ENCODE measurements at regions of chr5 and their contacts with region 1.

Region 1: DNA sequence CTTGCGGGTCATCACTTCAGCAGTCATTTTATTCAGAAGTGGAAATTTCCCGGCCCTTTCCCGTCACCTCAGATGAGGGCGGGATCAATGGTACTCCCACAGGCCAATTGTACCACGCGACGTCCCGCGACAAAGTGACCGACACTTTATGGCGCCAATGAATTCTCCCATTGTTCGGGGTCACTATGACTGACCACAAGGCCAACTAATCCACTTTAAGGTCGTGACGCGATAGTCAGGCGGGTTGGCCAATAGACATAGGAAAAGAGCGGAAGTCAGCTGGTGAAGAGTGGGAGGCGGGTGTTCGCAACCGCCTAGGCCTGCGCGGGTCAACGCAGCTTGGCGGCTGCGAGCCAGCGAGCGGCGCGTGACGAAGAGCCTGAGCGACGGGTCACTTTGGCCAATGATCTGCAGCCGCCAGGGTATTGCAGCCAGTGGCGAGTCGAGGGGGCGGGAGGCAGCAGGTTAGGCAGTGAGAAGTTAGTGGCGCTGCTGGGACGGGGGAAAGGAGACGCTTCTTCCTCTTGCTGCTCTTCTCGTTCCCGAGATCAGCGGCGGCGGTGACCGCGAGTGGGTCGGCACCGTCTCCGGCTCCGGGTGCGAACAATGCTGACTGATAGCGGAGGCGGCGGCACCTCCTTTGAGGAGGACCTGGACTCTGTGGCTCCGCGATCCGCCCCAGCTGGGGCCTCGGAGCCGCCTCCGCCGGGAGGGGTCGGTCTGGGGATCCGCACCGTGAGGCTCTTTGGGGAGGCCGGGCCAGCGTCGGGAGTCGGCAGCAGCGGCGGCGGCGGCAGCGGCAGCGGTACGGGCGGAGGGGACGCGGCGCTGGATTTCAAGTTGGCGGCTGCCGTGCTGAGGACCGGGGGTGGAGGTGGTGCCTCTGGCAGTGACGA is at the start of gene ANKHD1:
- DNase-seq: peak; percentile 99
- H3K4me3 Mint-ChIP-seq: no peak within 1 kb of the TSS
- H3K27ac Mint-ChIP-seq: no peak within 1 kb of the TSS
- H3K4me1 Mint-ChIP-seq: peaks cover 31% of the 10 kb centered on the region
- H3K27me3 Mint-ChIP-seq: no peaks in the 10 kb centered on the region
- total RNA-seq, gene ANKHD1: 102 to 105 TPM

Region 2: GRCh38 chr5:140244525-140245025 is 157.0 kb before region 1 on chr5:
- CTCF ChIA-PET with region 1: interaction called, 12 read pairs
- POLR2A ChIA-PET with region 1: no interaction called
- intact Hi-C with region 1: no loop called
- DNase-seq: peak; percentile 88
- H3K4me3 Mint-ChIP-seq: no peak overlapping the region
- H3K27ac Mint-ChIP-seq: no peak overlapping the region
- H3K4me1 Mint-ChIP-seq: peaks cover 23% of the 10 kb centered on the region
- H3K27me3 Mint-ChIP-seq: no peaks in the 10 kb centered on the region

Region 3: GRCh38 chr5:140381972-140382371 is 19.6 kb before region 1 on chr5:
- CTCF ChIA-PET with region 1: no interaction called
- POLR2A ChIA-PET with region 1: no interaction called
- intact Hi-C with region 1: loop called (anchors 1 kb)
- DNase-seq: peak; percentile 51
- H3K4me3 Mint-ChIP-seq: no peak overlapping the region
- H3K27ac Mint-ChIP-seq: no peak overlapping the region
- H3K4me1 Mint-ChIP-seq: peaks cover 15% of the 10 kb centered on the region
- H3K27me3 Mint-ChIP-seq: no peaks in the 10 kb centered on the region

Region 4: GRCh38 chr5:140557136-140557805 is 155.7 kb after region 1 on chr5 and contains the start of gene SRA1:
- CTCF ChIA-PET with region 1: no interaction called
- POLR2A ChIA-PET with region 1: interaction called, 3 read pairs
- intact Hi-C with region 1: loop called (anchors 2 kb)
- DNase-seq: peak; percentile 93
- H3K4me3 Mint-ChIP-seq: peak within 1 kb of the TSS; percentile 86
- H3K27ac Mint-ChIP-seq: peak within 1 kb of the TSS; percentile 90
- H3K4me1 Mint-ChIP-seq: peaks cover 45% of the 10 kb centered on the region
- H3K27me3 Mint-ChIP-seq: no peaks in the 10 kb centered on the region
- total RNA-seq, gene SRA1: 46.0 to 46.7 TPM

Region 5: DNA sequence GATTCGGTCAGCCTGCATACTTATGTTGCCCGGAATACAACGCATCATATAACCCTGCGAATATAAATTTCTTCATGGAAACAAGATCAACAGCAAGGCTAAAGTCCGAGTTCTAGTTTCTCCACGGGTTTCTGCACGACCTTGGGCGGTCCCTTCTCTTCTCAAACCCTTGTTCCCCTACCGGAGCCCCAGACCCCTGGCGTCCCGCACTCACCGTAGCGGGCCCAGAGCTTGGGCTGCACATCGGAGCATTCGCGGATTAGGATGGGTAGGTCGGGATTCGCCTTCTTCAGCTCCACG is 245.4 kb after region 1 on chr5:
- CTCF ChIA-PET with region 1: no interaction called
- POLR2A ChIA-PET with region 1: interaction called, 15 read pairs
- intact Hi-C with region 1: no loop called
- DNase-seq: no peak
- H3K4me3 Mint-ChIP-seq: peak overlapping the region; percentile 100
- H3K27ac Mint-ChIP-seq: peak overlapping the region; percentile 98
- H3K4me1 Mint-ChIP-seq: peaks cover 35% of the 10 kb centered on the region
- H3K27me3 Mint-ChIP-seq: no peaks in the 10 kb centered on the region

Region 6: DNA sequence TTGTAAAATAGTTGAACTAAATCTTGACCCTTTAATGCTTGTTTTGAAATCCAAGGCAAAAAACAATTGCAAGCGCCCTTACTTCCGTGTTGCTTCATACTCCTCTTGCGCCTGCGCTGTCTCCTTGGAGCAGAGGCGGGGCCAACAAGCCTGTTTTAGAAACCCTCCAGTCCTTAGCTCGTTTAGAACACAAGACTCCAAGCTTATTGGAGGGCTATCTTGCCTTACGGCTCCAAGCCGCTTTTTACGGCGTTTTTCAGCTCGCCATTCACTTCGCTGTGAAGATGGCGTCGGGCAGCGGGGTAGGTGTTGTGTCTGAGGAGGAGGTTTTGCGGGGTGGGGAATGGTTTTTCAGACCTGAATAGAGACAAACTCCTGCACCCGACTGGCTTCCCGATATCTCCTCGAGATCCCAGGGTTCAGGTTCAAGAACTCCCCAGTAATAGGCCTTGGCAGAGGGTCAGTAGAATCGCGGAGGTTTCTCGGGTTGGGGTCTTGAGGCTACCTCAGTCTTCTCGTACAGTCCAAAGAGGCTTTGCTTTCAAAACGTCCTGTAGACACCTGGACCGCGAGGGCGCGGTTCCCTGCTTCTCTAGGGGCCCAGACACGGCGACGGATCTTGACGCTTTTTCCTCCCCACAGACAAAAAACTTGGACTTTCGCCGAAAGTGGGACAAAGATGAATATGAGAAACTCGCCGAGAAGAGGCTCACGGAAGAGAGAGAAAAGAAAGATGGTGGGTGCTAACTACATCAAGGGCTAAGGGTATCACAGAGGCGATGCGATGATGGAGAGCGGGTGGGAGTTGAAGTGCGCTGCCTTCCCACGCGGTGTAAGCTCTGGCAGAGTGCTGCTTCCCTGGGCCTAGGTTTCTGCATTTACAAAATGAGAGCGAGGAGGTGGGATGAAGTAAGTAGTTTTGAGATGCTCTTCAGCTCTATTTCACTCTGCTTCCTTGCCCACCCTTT is 298.9 kb after region 1 on chr5 and contains the start of gene ZMAT2:
- CTCF ChIA-PET with region 1: no interaction called
- POLR2A ChIA-PET with region 1: interaction called, 3 read pairs
- intact Hi-C with region 1: loop called (anchors 2 kb)
- DNase-seq: peak; percentile 97
- H3K4me3 Mint-ChIP-seq: peak within 1 kb of the TSS; percentile 97
- H3K27ac Mint-ChIP-seq: peak within 1 kb of the TSS; percentile 90
- H3K4me1 Mint-ChIP-seq: peaks cover 28% of the 10 kb centered on the region
- H3K27me3 Mint-ChIP-seq: no peaks in the 10 kb centered on the region
- total RNA-seq, gene ZMAT2: 51.4 to 53.4 TPM

Region 7: GRCh38 chr5:140977003-140977402 is 575.4 kb after region 1 on chr5:
- CTCF ChIA-PET with region 1: no interaction called
- POLR2A ChIA-PET with region 1: no interaction called
- intact Hi-C with region 1: no loop called
- DNase-seq: no peak
- H3K4me3 Mint-ChIP-seq: no peak overlapping the region
- H3K27ac Mint-ChIP-seq: no peak overlapping the region
- H3K4me1 Mint-ChIP-seq: no peaks in the 10 kb centered on the region
- H3K27me3 Mint-ChIP-seq: peaks cover 3% of the 10 kb centered on the region

Measured in activated CD4-positive, alpha-beta memory T cell treated with anti-CD3 and anti-CD28 coated beads for 36 hours (primary cell).